ENCODE measurements at regions of chr4 and their contacts with region 1.

Region 1: DNA sequence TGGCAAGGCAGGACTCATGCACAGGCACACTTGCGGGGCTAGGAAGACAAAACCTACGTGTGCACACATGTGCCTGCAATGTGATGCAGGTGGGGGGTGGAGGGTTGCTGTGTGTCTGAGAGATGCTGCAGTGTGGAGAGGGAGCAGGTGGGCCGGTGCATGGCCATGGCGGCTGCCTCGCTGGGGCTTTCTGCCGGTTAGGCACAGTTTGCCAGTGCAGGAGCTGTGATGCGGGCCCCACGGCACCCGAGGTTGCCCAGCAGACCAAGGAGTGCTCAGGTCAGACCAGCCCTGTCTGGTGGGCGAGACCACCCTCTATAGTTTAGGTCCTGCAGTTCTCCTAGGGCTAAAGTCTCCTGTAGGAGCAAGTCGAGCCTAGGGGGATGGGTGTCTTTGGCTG is 4.4 kb upstream of the AFM start:
- DNase-seq: no peak
- H3K4me3 ChIP-seq: no peak overlapping the region
- H3K27ac ChIP-seq: no peak overlapping the region
- H3K4me1 ChIP-seq: no peaks in the 10 kb centered on the region
- H3K27me3 ChIP-seq: no peaks in the 10 kb centered on the region

Region 2: DNA sequence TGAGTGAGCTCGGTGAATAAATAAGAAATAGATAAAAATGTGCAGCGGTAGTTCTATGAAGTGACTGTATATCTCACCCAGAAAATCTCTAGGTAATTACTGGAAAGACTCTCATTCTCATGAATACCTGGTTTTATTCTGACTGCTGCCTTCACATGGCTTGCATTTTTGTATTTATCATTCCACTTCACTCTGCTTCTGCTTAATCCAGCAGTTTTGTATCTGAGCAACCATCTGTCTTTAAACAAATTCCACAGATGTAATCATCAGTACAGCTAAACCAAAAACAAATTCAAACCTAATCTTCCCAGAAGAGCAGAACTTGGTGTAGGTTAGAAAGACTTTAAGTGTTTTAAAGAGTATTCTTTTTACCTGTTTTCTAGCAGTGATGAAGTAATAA is 84.2 kb before region 1 on chr4:
- CTCF ChIA-PET with region 1: no interaction called
- POLR2A ChIA-PET with region 1: no interaction called
- DNase-seq: no peak
- H3K4me3 ChIP-seq: no peak overlapping the region
- H3K27ac ChIP-seq: no peak overlapping the region
- H3K4me1 ChIP-seq: no peaks in the 10 kb centered on the region
- H3K27me3 ChIP-seq: no peaks in the 10 kb centered on the region

Region 3: GRCh38 chr4:74042681-74043080 is 565.5 kb after region 1 on chr4:
- CTCF ChIA-PET with region 1: no interaction called
- POLR2A ChIA-PET with region 1: no interaction called
- DNase-seq: peak in 1 of 3 donors; percentile 25
- H3K4me3 ChIP-seq: no peak overlapping the region
- H3K27ac ChIP-seq: no peak overlapping the region
- H3K4me1 ChIP-seq: peaks cover 11 to 38% (median 20%) of the 10 kb centered on the region in 4 experiments
- H3K27me3 ChIP-seq: no peaks in the 10 kb centered on the region

Region 4: DNA sequence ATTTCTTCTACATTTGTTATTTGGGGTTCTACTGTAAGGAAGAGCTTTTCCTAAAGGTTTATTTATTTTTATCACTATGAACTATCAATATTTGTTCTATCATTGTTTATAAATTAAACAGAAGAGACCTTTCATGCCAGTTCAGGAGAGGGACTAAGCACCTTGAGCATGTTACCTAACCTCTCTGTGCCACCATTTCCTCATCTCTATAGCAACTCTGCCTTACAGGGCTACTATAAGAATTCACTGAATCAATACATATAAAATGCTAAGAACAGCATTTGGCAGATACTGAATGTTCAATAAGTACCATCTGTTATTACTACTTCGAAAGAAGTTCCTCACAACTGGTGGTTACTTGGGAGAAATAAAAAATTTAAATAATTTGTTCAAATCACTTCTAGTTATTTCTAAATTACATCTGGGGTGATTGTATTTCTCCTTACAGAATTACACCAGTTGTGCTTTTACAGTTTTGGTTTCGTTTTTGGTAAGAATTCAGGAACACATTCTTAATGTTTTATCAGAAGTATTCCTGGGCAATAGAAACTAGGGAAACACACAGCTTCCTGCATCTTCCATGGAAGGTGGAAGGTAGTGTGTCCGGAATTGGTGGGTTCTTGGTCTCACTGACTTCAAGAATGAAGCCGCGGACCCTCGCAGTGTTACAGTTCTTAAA is 920.7 kb after region 1 on chr4:
- CTCF ChIA-PET with region 1: no interaction called
- POLR2A ChIA-PET with region 1: interaction called, 10 read pairs
- DNase-seq: peak; percentile 54 to 74 (median 68)
- H3K4me3 ChIP-seq: peak overlapping the region; percentile 43 to 84 (median 73)
- H3K27ac ChIP-seq: peak overlapping the region; percentile 83 to 90
- H3K4me1 ChIP-seq: peaks cover 0 to 11% (median 0%) of the 10 kb centered on the region in 4 experiments
- H3K27me3 ChIP-seq: no peaks in the 10 kb centered on the region

Measured in common myeloid progenitor, CD34-positive (primary cell).